Prostate gland (tissue), 2 donors: ENCODE measurements at regions of chr15 and their contacts with region 1.

Region 1: DNA sequence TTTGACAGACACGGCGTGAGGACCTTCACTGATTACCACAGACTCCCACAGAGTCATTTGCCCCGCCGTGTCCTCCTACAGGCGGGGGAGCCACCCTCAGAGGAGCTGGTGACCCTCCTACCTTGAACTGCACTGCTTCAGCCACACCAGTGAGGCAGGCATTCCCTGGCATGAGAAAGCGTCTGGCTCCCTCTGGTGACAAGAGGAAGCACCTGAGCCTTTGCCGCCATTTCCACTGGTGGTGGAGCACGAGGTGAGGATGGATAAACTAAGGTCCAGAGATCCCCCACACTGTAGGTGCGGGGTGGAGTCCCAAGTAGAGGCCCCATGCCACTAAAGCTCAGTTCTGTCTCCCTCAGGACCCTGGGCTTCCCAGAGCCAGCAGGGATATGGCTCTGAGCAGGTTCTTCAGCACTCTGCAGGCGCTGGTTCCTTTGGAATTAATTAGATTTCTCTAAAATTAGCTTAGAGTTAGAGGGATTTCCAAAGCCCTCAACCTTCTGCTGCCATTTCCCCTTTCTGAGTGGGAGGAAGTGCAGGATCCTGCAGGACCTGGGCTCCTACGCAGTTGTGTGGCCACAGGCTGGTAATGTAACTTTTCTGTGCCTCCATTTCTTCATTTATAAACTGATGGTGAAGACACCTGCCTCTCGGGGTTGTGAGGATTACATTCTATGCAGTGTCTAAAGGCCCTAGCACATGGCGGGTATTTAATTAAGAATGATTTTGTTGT is 224.0 kb downstream of the SLCO3A1 start:
- DNase-seq: peak; percentile 68
- H3K4me3 ChIP-seq: no peak overlapping the region
- H3K27ac ChIP-seq: no peak overlapping the region
- H3K4me1 ChIP-seq: no peaks in the 10 kb centered on the region
- H3K27me3 ChIP-seq: no peaks in the 10 kb centered on the region
- CTCF ChIP-seq: peak; percentile 19 to 83 (median 68)
- POLR2A ChIP-seq: no peak

Region 2: GRCh38 chr15:91302588-91303439 is 774.7 kb before region 1 on chr15:
- intact Hi-C with region 1: loop called (anchors 2 kb)
- DNase-seq: peak; percentile 8
- H3K4me3 ChIP-seq: no peak overlapping the region
- H3K27ac ChIP-seq: no peak overlapping the region
- H3K4me1 ChIP-seq: no peaks in the 10 kb centered on the region
- H3K27me3 ChIP-seq: peaks cover 2% of the 10 kb centered on the region
- CTCF ChIP-seq: peak; percentile 53 to 68 (median 67)
- POLR2A ChIP-seq: no peak

Region 3: GRCh38 chr15:91706322-91707032 is 371.0 kb before region 1 on chr15:
- intact Hi-C with region 1: loop called (anchors 10 kb)
- DNase-seq: peak; percentile 60
- H3K4me3 ChIP-seq: no peak overlapping the region
- H3K27ac ChIP-seq: no peak overlapping the region
- H3K4me1 ChIP-seq: no peaks in the 10 kb centered on the region
- H3K27me3 ChIP-seq: no peaks in the 10 kb centered on the region
- CTCF ChIP-seq: peak; percentile 50 to 80 (median 56)
- POLR2A ChIP-seq: no peak

Region 4: GRCh38 chr15:91852741-91853510 is 224.6 kb before region 1 on chr15:
- intact Hi-C with region 1: loop called (anchors 2 kb)
- DNase-seq: peak; percentile 57
- H3K4me3 ChIP-seq: peak overlapping the region; percentile 49 to 60
- H3K27ac ChIP-seq: peak overlapping the region; percentile 83
- H3K4me1 ChIP-seq: no peaks in the 10 kb centered on the region
- H3K27me3 ChIP-seq: no peaks in the 10 kb centered on the region
- CTCF ChIP-seq: peak; percentile 67 to 88 (median 80)
- POLR2A ChIP-seq: no peak

Region 5: DNA sequence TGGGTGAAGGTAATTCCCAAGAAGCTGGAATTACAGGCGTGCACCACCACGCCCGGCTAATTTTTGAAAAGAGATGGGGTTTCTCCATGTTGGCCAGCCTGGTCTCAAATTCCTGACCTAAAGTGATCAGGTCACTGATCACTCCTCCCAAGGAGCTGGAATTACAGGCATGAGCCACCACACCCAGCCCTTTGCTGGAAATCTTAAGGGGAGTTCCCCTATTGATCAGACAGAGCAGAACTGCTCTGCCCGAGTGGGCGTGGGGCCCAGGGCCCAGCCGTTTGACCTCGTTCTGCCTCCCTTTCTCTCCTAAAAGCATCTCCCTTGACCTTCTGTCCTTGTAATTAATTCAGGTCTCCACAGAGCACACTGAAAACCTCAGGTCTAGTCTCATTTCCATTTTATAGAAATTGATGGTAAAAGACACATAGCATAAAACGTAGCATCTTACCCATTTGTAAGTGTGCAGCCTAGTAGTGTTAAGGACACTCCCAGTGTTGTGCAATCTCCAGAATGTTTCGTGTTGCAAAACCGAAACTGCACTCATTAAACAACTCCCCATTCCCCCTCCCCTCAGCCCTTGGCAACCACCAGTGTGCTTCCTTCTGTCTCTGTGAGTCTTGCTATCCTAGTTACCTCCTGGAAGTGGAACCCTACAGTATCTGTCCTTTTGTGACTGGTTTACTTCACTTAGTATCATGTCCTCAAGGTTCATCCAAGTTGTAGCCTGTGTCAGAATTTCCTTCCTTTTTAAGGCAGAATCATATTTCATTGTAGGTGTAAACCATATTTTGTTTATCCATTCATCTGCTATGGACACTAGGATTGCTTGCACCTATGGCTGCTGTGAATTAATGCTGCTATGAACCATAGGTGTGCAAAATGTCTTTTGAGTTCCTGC is 134.6 kb before region 1 on chr15:
- intact Hi-C with region 1: loop called (anchors 10 kb)
- DNase-seq: peak; percentile 91
- H3K4me3 ChIP-seq: no peak overlapping the region
- H3K27ac ChIP-seq: peak overlapping the region; percentile 25 to 58
- H3K4me1 ChIP-seq: peaks cover 10% of the 10 kb centered on the region
- H3K27me3 ChIP-seq: no peaks in the 10 kb centered on the region
- CTCF ChIP-seq: no peak
- POLR2A ChIP-seq: no peak